Activated naive CD4-positive, alpha-beta T cell treated with anti-CD3 and anti-CD28 coated beads, Interleukin-2, amount 10 ng/mL, durations not matched to agents 7 days and 5 days (primary cell): ENCODE measurements at regions of chr17 and their contacts with region 1.

Region 1: DNA sequence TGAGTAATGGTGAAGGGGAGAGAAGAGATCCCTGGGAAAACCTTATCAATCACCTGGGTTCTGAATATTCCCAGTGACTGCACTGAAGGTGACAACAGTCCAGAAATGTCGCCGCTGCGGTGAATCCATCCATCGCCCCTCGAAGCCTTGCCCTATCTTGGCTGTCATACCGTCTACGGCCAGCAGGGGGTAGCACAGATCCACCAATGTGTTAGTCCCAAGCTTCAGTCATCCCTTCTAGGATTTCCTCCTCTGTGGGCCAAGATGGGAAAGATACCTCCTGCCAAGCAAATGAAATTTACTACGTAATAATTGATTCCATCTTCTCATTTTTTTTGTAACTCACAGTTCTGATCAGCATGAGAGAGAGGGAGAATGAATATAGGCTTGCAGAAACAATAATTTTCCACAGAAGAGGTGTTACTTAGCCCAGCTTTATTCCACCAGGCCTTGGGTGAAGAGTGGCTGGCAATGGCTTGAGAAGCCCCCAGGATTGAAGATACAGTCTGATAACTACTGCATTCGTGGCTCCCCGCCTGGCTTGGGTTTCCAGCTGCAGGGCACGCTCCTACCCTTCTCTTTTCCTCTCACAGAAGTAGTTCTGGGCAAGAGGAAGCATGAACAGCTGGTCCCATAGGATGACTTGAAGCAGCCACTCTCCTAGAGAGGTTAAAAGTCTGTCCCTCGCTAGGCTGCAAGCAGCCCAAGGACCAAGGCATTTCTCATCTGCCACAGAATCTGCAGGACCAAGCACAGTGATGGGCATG is 2.6 kb upstream of the FMNL1 start:
- DNase-seq: peak; percentile 91
- H3K4me3 Mint-ChIP-seq: peak overlapping the region; percentile 86
- H3K27ac Mint-ChIP-seq: peak overlapping the region; percentile 85
- H3K4me1 Mint-ChIP-seq: peaks cover 33% of the 10 kb centered on the region
- H3K27me3 Mint-ChIP-seq: no peaks in the 10 kb centered on the region

Region 2: GRCh38 chr17:45148183-45149036 is 70.7 kb before region 1 on chr17 and contains the start of gene HEXIM1:
- CTCF ChIA-PET with region 1: interaction called, 17 read pairs
- DNase-seq: peak; percentile 99
- H3K4me3 Mint-ChIP-seq: peak within 1 kb of the TSS; percentile 99
- H3K27ac Mint-ChIP-seq: peak within 1 kb of the TSS; percentile 100
- H3K4me1 Mint-ChIP-seq: peaks cover 56% of the 10 kb centered on the region
- H3K27me3 Mint-ChIP-seq: peaks cover 17% of the 10 kb centered on the region

Region 3: GRCh38 chr17:45241328-45242011 is 22.4 kb after region 1 on chr17:
- CTCF ChIA-PET with region 1: interaction called, 276 read pairs
- DNase-seq: no peak
- H3K4me3 Mint-ChIP-seq: no peak overlapping the region
- H3K27ac Mint-ChIP-seq: no peak overlapping the region
- H3K4me1 Mint-ChIP-seq: peaks cover 32% of the 10 kb centered on the region
- H3K27me3 Mint-ChIP-seq: no peaks in the 10 kb centered on the region

Region 4: GRCh38 chr17:45265821-45266220 is 46.7 kb after region 1 on chr17:
- CTCF ChIA-PET with region 1: interaction called, 41 read pairs
- DNase-seq: no peak
- H3K4me3 Mint-ChIP-seq: no peak overlapping the region
- H3K27ac Mint-ChIP-seq: peak overlapping the region; percentile 62
- H3K4me1 Mint-ChIP-seq: peaks cover 21% of the 10 kb centered on the region
- H3K27me3 Mint-ChIP-seq: no peaks in the 10 kb centered on the region

Region 5: DNA sequence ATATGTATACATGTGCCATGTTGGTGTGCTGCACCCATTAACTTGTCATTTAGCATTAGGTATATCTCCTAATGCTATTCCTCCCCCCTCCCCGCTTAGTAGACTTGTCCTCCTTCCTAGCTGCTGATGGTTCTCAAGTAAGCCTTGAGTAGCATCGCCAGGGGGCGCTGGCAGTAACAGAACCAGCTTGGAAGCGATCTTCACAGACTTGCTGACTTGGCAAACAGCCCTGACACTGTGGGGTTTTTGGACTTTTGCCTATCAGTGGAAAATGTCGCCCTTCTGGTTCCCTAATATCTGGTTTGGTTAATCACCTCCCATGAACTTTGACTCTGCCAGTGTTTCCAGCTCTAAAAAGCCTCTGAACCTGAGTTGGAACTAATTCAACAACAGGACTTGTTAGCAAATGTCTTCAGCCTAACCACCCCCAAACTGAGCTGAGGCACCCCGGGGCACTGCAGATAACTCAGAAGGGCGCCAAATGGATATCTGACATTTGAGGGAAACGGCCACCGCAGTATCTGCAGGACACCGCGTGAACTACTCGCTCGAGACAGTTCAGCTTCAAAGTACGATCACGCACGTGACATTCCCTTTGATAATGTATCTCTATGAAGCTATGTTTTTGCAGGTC is 58.3 kb after region 1 on chr17:
- CTCF ChIA-PET with region 1: interaction called, 41 read pairs
- DNase-seq: peak; percentile 95
- H3K4me3 Mint-ChIP-seq: no peak overlapping the region
- H3K27ac Mint-ChIP-seq: no peak overlapping the region
- H3K4me1 Mint-ChIP-seq: peaks cover 16% of the 10 kb centered on the region
- H3K27me3 Mint-ChIP-seq: no peaks in the 10 kb centered on the region

Region 6: DNA sequence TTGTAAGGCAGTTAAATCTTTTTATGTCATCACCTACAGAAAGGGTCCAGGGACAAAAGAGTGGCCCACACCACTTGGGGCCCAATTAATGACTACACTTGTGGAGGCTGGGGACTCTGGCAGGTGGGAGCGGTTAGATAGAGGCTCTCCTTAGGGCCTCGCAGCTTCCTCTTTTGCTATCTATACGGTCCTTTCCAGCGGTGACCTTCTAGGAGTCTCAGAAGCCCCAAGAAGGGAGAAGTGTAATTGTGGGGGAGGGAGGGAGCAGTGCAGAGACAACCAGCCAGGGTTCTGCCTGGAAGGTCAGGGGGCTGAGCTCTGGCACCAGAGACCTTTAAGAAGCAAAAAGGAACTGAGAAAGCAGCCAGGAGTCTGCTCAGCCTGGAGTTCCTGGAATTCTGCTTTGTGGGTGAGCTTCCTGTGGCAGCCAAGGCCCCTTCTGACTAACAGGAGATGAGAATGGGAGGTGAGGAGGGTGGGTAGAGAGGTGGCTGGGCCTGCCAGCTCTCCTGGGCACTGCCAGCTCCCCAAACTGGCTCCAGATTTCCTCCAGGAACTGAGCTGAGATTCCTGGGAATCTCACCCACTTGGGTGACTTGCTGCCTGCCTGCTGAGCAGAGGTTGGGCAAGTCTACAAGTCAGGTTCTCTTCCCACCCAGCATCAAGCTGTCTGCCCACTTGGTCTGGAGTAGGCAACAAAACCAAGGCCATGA is 114.1 kb after region 1 on chr17:
- CTCF ChIA-PET with region 1: no interaction called
- DNase-seq: no peak
- H3K4me3 Mint-ChIP-seq: no peak overlapping the region
- H3K27ac Mint-ChIP-seq: peak overlapping the region; percentile 20
- H3K4me1 Mint-ChIP-seq: peaks cover 23% of the 10 kb centered on the region
- H3K27me3 Mint-ChIP-seq: peaks cover 6% of the 10 kb centered on the region

Region 7: GRCh38 chr17:45364531-45365390 is 145.7 kb after region 1 on chr17:
- CTCF ChIA-PET with region 1: no interaction called
- DNase-seq: no peak
- H3K4me3 Mint-ChIP-seq: no peak overlapping the region
- H3K27ac Mint-ChIP-seq: no peak overlapping the region
- H3K4me1 Mint-ChIP-seq: no peaks in the 10 kb centered on the region
- H3K27me3 Mint-ChIP-seq: peaks cover 58% of the 10 kb centered on the region

Region 8: DNA sequence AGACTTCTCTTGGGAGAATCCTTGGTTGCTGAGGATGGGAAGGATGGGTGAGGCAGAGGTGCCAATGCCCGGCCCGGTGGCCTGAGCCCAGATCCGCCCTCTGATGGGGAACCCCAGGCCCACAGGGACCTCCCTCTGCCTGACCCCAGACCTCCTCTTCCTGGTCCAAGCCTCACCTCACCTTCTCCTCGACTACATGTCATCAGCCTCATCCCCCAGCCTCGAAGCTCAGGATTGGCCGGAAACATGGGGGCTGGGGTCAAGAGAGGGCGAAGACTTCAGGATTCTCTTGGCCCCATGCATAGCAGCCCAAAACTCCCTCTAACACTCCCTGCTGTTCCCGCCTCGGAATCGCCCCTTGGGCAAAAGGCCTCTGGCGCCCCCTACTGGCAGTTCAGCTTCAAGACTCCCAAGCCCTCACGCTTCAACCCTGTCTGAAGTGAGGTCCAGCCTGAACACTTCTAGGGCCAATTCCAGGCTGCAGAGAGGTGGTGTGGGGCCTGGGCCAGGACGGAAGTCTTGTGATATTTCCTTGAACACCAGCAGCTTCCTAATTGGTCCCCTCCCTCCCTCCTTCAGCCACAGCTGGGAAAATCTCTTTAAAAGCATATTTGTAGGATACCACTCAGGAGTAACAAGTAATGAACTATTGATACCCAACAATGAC is 166.4 kb after region 1 on chr17:
- CTCF ChIA-PET with region 1: interaction called, 71 read pairs
- DNase-seq: peak; percentile 92
- H3K4me3 Mint-ChIP-seq: no peak overlapping the region
- H3K27ac Mint-ChIP-seq: no peak overlapping the region
- H3K4me1 Mint-ChIP-seq: peaks cover 24% of the 10 kb centered on the region
- H3K27me3 Mint-ChIP-seq: peaks cover 36% of the 10 kb centered on the region

Region 9: DNA sequence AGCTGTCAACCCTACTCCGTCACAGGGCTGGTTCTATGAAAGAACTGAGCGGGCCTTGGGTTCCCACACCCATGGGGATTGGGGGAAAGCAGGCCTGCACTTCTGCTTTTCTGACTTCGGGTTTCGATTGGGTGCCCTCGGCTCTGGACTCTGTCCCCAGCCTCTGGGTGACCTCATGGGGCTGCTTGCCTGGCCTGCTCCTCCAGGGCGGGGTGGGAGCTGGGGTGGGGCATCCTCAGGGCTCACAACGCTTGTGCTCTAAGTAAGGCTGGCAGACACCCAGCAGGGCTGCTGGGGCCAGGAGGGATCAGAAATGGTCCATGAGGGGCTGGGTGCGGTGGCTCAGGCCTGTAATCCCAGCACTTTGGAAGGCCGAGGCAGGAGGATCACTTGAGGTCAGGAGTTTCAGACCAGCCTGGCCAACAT is 194.4 kb after region 1 on chr17:
- CTCF ChIA-PET with region 1: no interaction called
- DNase-seq: no peak
- H3K4me3 Mint-ChIP-seq: no peak overlapping the region
- H3K27ac Mint-ChIP-seq: no peak overlapping the region
- H3K4me1 Mint-ChIP-seq: peaks cover 40% of the 10 kb centered on the region
- H3K27me3 Mint-ChIP-seq: no peaks in the 10 kb centered on the region